Activated T-helper 2 cell treated with anti-CD3 and anti-CD28 coated beads, Interferon-gamma antibody, Interleukin-2, Interleukin-4, amounts not matched to agents 10 μg/mL and 5 μg/mL and 100 μg/mL, durations not matched to agents 14 hours and 24 hours and 36 hours (primary cell): ENCODE measurements at regions of chr14 and their contacts with region 1.

Region 1: GRCh38 chr14:68663385-68664076 is 129.3 kb downstream of the ZFP36L1 start:
- DNase-seq: peak; percentile 24
- H3K4me3 Mint-ChIP-seq: peak overlapping the region; percentile 34
- H3K27ac Mint-ChIP-seq: peak overlapping the region; percentile 80
- H3K4me1 Mint-ChIP-seq: peaks cover 53% of the 10 kb centered on the region
- H3K27me3 Mint-ChIP-seq: no peaks in the 10 kb centered on the region

Region 2: GRCh38 chr14:68283378-68284123 is 380.0 kb before region 1 on chr14:
- intact Hi-C with region 1: loop called (anchors 1 kb)
- DNase-seq: peak; percentile 33
- H3K4me3 Mint-ChIP-seq: no peak overlapping the region
- H3K27ac Mint-ChIP-seq: peak overlapping the region; percentile 59
- H3K4me1 Mint-ChIP-seq: peaks cover 55% of the 10 kb centered on the region
- H3K27me3 Mint-ChIP-seq: no peaks in the 10 kb centered on the region

Region 3: GRCh38 chr14:68466491-68467032 is 197.0 kb before region 1 on chr14:
- intact Hi-C with region 1: loop called (anchors 1 kb)
- DNase-seq: no peak
- H3K4me3 Mint-ChIP-seq: no peak overlapping the region
- H3K27ac Mint-ChIP-seq: no peak overlapping the region
- H3K4me1 Mint-ChIP-seq: peaks cover 39% of the 10 kb centered on the region
- H3K27me3 Mint-ChIP-seq: no peaks in the 10 kb centered on the region

Region 4: DNA sequence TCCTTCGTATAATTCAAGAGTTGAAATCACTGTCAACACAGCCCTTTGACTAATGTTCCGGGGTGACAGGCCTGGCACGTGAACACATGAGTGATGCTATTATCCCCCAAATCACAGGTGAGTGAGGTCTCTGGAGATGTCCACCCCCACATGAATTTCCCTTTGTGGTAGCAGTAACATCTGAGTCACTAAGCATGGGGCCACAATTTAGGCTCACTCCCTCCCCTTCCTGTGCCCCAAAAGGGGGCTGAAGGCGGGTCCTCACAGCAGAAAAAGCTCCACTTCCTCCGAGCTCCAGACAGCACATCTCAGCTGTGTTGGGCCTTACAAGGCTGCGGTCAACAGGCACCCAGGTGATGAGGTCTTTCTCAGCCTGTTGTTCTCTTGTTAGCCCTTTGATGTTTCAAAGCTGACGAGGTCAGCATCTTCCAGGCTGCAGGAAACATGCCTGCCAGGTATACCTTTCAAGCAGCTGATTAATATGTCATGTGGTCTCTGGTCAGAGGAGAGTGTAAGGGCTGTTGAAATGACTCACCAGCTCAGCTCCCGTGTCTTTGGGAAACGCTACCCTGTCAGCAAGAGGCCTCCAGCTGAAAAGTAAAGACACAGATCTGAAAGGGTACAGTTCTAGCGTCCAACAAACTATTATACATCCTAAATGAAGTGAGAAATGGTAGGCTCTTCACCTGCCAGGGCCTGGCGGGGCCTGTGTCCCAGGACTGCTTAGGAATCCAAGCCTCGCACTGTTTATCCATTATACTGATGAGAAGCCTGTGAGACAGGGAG is 22.1 kb after region 1 on chr14:
- intact Hi-C with region 1: loop called (anchors 1 kb)
- DNase-seq: peak; percentile 70
- H3K4me3 Mint-ChIP-seq: peak overlapping the region; percentile 24
- H3K27ac Mint-ChIP-seq: peak overlapping the region; percentile 76
- H3K4me1 Mint-ChIP-seq: peaks cover 41% of the 10 kb centered on the region
- H3K27me3 Mint-ChIP-seq: no peaks in the 10 kb centered on the region

Region 5: GRCh38 chr14:68718023-68718995 is 54.8 kb after region 1 on chr14:
- intact Hi-C with region 1: loop called (anchors 2 kb)
- DNase-seq: no peak
- H3K4me3 Mint-ChIP-seq: no peak overlapping the region
- H3K27ac Mint-ChIP-seq: no peak overlapping the region
- H3K4me1 Mint-ChIP-seq: peaks cover 31% of the 10 kb centered on the region
- H3K27me3 Mint-ChIP-seq: no peaks in the 10 kb centered on the region

Region 6: DNA sequence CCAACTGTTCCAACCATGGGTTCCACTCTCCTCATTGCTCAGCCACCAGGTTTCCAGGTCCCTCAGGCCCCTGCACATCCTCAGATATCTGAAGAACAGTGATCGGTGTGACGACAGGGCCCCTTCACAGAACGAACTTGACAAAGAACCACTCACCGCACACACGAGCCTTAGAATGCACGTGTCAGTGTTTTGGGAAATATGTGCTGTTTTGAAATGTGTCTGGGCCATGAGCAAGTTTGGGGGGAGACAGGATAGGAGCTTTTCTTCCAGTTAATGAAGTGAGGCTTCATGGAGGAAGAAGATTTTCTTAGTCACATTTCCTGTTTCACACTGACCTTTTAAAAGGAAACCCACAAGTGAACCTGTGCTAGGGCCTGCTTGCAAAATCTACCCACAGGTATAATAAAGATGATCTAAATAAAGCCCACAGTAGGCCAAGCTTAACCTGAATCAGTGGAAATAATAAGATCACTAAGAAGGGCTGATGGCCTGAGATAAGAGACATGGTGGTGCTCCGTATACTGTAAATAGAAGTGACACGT is 70.8 kb after region 1 on chr14:
- intact Hi-C with region 1: loop called (anchors 1 kb)
- DNase-seq: no peak
- H3K4me3 Mint-ChIP-seq: peak overlapping the region; percentile 9
- H3K27ac Mint-ChIP-seq: peak overlapping the region; percentile 63
- H3K4me1 Mint-ChIP-seq: peaks cover 53% of the 10 kb centered on the region
- H3K27me3 Mint-ChIP-seq: no peaks in the 10 kb centered on the region

Region 7: GRCh38 chr14:68795597-68796417 is 132.3 kb after region 1 on chr14:
- intact Hi-C with region 1: loop called (anchors 1 kb)
- DNase-seq: peak; percentile 78
- H3K4me3 Mint-ChIP-seq: peak overlapping the region; percentile 84
- H3K27ac Mint-ChIP-seq: peak overlapping the region; percentile 99
- H3K4me1 Mint-ChIP-seq: peaks cover 34% of the 10 kb centered on the region
- H3K27me3 Mint-ChIP-seq: no peaks in the 10 kb centered on the region